ENCODE measurements at regions of chr4 and their contacts with region 1.

Region 1: DNA sequence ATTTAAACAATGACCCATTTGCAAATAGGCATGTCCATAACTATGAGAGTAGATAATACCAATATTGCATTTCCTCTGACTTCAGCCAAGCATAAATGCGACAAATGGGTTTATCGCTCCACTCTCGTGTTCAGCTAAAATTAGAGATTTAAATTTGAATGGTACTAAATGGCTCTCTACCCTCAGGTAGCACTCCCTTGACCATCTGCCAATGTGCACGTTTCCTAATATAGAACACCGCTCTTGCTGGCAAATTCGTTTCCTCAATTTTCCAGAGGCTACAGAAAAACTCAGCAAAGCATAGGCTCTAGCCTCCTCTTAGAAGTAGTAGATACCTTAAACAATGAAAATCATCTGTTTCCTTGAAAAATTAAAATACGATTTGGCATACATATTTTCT is 251.6 kb downstream of the ADGRA3 start:
- DNase-seq: no peak
- H3K4me3 ChIP-seq: no peak overlapping the region
- H3K27ac ChIP-seq: no peak overlapping the region
- H3K4me1 ChIP-seq: no peaks in the 10 kb centered on the region
- H3K27me3 ChIP-seq: no peaks in the 10 kb centered on the region
- CTCF ChIP-seq: no peak
- POLR2A ChIP-seq: no peak

Region 2: DNA sequence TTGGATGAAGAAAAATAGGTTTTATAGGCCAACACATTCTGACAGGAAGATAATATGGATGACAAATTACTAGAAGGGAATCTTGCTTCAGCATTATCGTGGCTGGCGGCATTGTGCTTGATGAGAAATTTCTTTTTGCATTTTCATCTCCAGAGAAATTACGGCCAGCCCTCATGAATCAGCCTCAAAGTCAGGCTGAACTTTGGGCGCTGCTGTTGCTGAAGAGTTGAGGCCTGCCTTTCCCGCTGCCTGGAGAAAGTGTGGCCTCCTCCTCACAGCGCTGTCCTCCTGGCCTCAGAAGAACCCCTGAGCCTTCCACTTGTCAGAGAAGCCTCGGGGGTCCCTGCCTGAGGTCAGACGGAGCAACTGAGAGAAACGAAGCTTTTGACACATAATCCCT is 43.3 kb before region 1 on chr4:
- intact Hi-C with region 1: loop called (anchors 2 kb)
- DNase-seq: no peak
- H3K4me3 ChIP-seq: no peak overlapping the region
- H3K27ac ChIP-seq: no peak overlapping the region
- H3K4me1 ChIP-seq: no peaks in the 10 kb centered on the region
- H3K27me3 ChIP-seq: no peaks in the 10 kb centered on the region
- CTCF ChIP-seq: no peak
- POLR2A ChIP-seq: no peak

Region 3: GRCh38 chr4:22363036-22363435 is 98.8 kb after region 1 on chr4:
- intact Hi-C with region 1: no loop called
- DNase-seq: no peak
- H3K4me3 ChIP-seq: no peak overlapping the region
- H3K27ac ChIP-seq: no peak overlapping the region
- H3K4me1 ChIP-seq: no peaks in the 10 kb centered on the region
- H3K27me3 ChIP-seq: no peaks in the 10 kb centered on the region
- CTCF ChIP-seq: no peak
- POLR2A ChIP-seq: no peak